Sigmoid colon (tissue), 7 donors: ENCODE measurements at regions of chr10 and their contacts with region 1.

Region 1: DNA sequence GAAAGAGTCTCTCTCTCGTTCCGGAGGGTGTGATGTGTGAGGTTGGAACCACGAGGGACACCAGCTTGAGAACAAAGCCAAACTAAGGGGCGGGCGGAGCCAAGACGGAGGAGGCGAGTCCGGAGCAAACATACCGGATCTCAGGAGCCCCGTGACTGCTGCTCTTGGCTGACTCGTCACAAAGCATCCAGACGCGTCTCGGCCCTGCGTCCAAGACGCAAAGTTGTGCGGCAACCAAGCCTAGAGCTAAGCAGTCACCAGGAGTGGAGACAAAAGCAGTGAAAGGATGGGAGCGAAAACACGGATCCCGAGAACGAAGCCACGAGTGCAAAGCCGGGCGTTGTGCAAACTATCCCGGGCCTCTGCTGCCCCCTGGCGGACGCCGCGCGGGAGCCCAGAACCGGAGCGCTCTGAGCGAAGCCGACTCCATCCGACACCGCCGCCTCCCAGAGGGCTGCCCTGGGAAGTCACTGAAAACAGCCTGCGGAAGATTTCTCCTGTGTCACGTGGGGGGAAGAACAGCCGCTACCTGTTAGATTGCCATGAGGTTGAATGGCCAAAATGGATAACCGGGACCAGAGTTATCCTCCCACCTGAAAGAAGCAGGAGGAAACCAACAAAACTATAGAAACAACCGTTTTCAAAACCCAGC is 46.4 kb upstream of the TMEM72 start:
- DNase-seq: peak; percentile 94
- H3K4me3 ChIP-seq: peak overlapping the region; percentile 29 to 53 (median 45)
- H3K27ac ChIP-seq: peak overlapping the region; percentile 40 to 74 (median 60)
- H3K4me1 ChIP-seq: peaks cover 0 to 16% (median 12%) of the 10 kb centered on the region in 4 donors
- H3K27me3 ChIP-seq: peaks cover 0 to 10% (median 0%) of the 10 kb centered on the region in 3 donors
- CTCF ChIP-seq: peak; percentile 92 to 98 (median 94)
- EP300 ChIP-seq: no peak
- POLR2A ChIP-seq: no peak

Region 2: GRCh38 chr10:43671656-43672531 is 1192.9 kb before region 1 on chr10:
- intact Hi-C with region 1: loop called (anchors 2 kb)
- DNase-seq: peak; percentile 77
- H3K4me3 ChIP-seq: no peak overlapping the region
- H3K27ac ChIP-seq: peak overlapping the region in 1 of 4 donors; percentile 29
- H3K4me1 ChIP-seq: peaks cover 0 to 23% (median 17%) of the 10 kb centered on the region in 4 donors
- H3K27me3 ChIP-seq: peaks cover 0 to 20% (median 10%) of the 10 kb centered on the region in 3 donors
- CTCF ChIP-seq: peak; percentile 74 to 87 (median 82)
- EP300 ChIP-seq: no peak
- POLR2A ChIP-seq: no peak

Region 3: DNA sequence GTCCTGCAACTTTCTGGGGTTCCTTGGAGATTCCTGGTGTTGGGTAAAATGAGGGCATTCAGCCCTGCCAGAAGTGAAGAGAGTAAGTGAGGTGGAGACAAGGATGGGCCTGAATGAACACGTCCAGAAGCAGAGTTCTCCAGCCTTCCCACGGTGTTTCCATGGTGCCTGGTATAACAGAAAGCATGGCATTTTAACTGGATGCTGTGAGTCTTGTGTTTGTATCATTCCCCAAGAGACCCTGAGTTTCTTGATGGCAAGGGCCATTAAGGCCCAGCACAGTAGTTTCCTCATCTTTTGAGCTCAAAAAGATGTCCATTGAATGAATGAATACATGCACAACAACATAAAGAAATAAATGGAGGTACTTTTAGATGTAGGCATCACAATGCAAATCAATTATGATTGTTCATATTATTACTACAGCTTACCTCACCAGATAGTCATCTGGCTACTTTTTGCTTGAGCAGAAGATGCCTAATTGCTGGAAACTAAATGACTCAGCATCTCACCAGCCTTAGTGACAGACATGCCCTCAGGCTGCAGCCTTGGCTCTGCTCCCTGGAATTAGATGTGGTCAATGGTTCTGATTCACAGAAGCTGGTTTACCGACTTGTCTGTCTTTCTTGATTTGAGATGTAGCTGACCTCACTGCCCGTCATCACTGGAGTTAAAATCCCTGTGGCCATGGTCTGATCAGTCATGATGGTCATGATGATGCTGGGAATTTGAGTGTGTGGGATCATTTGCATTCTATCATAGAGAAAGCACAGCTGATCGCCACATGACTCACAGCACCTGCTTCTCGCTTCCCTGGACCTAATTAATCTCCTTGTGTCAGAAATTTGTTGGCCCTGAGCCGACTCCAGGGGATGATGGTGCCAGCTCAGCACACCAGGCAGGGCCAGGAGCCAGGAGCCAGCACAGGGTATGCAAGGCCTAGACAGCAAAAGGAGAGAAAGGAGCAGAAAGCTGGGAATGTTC is 563.8 kb before region 1 on chr10:
- intact Hi-C with region 1: loop called (anchors 10 kb)
- DNase-seq: no peak
- H3K4me3 ChIP-seq: no peak overlapping the region
- H3K27ac ChIP-seq: no peak overlapping the region
- H3K4me1 ChIP-seq: peaks cover 0 to 10% (median 5%) of the 10 kb centered on the region in 4 donors
- H3K27me3 ChIP-seq: no peaks in the 10 kb centered on the region
- CTCF ChIP-seq: no peak
- EP300 ChIP-seq: no peak
- POLR2A ChIP-seq: no peak

Region 4: DNA sequence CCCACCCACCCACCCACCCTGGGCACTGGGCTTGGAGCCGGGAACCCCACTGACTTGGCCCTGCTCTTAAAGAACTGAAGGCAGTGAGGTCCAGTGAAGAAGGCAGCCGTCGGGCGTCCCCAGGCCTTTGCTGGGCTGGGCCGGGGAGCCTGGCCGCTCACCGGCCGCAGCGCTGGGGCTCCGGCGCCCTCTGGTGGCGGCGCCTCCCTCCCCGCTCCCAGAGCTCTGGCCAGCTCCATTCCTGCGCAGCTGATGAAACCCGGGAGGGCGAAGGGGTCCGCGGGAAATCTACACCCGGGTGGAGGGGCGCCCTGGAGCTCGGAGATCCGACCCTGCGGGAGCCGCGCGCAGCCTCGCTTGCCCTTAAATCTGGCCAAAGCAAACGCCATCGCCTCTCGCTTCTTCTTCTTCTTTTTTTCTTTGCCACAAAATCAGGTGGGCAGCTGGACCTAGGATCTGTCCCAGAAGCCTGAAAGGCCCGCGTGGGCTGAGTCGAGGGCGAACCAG is 478.2 kb before region 1 on chr10:
- intact Hi-C with region 1: loop called (anchors 2 kb)
- DNase-seq: peak; percentile 81
- H3K4me3 ChIP-seq: no peak overlapping the region
- H3K27ac ChIP-seq: peak overlapping the region in 2 of 4 donors; percentile 68 to 75
- H3K4me1 ChIP-seq: peaks cover 0 to 24% (median 18%) of the 10 kb centered on the region in 4 donors
- H3K27me3 ChIP-seq: peaks cover 2 to 35% (median 27%) of the 10 kb centered on the region in 3 donors
- CTCF ChIP-seq: peak; percentile 67 to 93 (median 76)
- EP300 ChIP-seq: no peak
- POLR2A ChIP-seq: no peak

Region 5: DNA sequence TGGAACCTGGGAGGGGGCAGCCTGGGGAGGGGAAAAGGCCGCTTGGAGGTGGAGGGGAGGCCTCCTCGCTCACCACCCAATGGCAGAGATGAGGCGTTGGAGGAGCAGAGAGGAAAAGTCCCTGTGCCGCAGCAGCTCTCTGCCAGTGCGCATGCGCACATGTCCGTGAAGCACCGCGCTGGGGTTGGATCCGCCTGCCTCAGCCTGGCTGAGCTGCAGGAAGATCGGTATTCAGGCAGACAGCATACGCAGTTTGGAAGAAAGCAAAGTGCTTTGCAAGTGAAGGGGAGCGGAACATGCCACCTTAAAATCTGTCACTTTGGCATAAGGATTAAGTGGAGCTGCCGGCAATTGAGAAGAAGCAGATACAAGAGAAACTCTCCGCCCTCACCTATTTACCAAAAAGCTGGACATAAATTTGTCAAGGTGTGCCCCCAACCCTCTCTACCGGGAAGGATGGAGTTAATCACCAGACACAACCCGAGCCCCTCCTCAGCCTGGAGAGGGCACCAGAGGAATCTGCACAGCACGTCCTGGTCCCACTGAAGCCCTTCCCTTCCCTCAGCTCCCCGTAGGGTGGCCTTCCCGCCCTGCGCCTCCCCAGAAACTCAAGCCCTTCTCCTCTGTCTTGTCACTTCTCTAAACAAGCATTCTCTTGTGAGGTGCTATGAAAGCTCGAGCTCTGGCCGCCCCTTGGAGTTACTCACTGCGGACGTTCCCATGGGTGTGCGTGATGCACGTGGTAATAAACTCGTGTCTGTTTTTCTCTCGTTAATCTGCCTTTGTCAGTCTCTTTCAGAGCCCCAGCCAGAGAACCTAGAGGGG is 14.2 kb after region 1 on chr10:
- intact Hi-C with region 1: loop called (anchors 2 kb)
- DNase-seq: peak; percentile 95
- H3K4me3 ChIP-seq: peak overlapping the region; percentile 27 to 51 (median 46)
- H3K27ac ChIP-seq: peak overlapping the region; percentile 77 to 91 (median 78)
- H3K4me1 ChIP-seq: peaks cover 0 to 17% (median 13%) of the 10 kb centered on the region in 4 donors
- H3K27me3 ChIP-seq: no peaks in the 10 kb centered on the region
- CTCF ChIP-seq: no peak
- EP300 ChIP-seq: peak in 1 of 4 donors; percentile 39
- POLR2A ChIP-seq: no peak